ENCODE measurements at regions of chr14 and their contacts with region 1.

Region 1: GRCh38 chr14:36014236-36014635 is 162.3 kb downstream of the PTCSC3 start:
- DNase-seq: no peak
- ATAC-seq: no peak
- H3K4me3 Mint-ChIP-seq: no peak overlapping the region
- H3K27ac Mint-ChIP-seq: no peak overlapping the region
- H3K4me1 Mint-ChIP-seq: peaks cover 22% of the 10 kb centered on the region
- H3K27me3 Mint-ChIP-seq: peaks cover 3% of the 10 kb centered on the region; the same call in 1 of the 2 replicates
- CTCF ChIP-seq: no peak

Region 2: GRCh38 chr14:35949985-35950384 is 64.3 kb before region 1 on chr14:
- CTCF ChIA-PET with region 1: interaction called, 10 read pairs
- POLR2A ChIA-PET with region 1: no interaction called
- DNase-seq: no peak
- ATAC-seq: no peak
- H3K4me3 Mint-ChIP-seq: no peak overlapping the region
- H3K27ac Mint-ChIP-seq: no peak overlapping the region
- H3K4me1 Mint-ChIP-seq: peaks cover 27% of the 10 kb centered on the region
- H3K27me3 Mint-ChIP-seq: no peaks in the 10 kb centered on the region
- CTCF ChIP-seq: no peak